Left cardiac atrium (tissue), 4 donors: ENCODE measurements at regions of chr9 and their contacts with region 1.

Region 1: GRCh38 chr9:98315551-98316060 is 60.2 kb upstream of the TBC1D2 start:
- DNase-seq: peak; percentile 82
- ATAC-seq: peak; percentile 92 to 93

Region 2: GRCh38 chr9:98707166-98708102 is 391.8 kb after region 1 on chr9:
- intact Hi-C with region 1: loop called in 1 of 2 experiments (anchors 5 kb)
- DNase-seq: peak; percentile 32
- ATAC-seq: peak; percentile 75

Region 3: GRCh38 chr9:98775831-98776441 is 460.3 kb after region 1 on chr9:
- intact Hi-C with region 1: loop called (anchors 2 to 5 kb)
- DNase-seq: no peak
- ATAC-seq: peak in 1 of 2 donors; percentile 54